Transverse colon (tissue), 4 donors: ENCODE measurements at regions of chr12 and their contacts with region 1.

Region 1: GRCh38 chr12:90124289-90124688 is 415.7 kb upstream of the ATP2B1 start:
- DNase-seq: no peak
- H3K4me3 ChIP-seq: no peak overlapping the region
- H3K27ac ChIP-seq: no peak overlapping the region
- H3K4me1 ChIP-seq: peaks cover 0 to 4% (median 1%) of the 10 kb centered on the region in 4 donors
- H3K27me3 ChIP-seq: no peaks in the 10 kb centered on the region
- CTCF ChIP-seq: no peak
- EP300 ChIP-seq: no peak
- POLR2A ChIP-seq: no peak

Region 2: DNA sequence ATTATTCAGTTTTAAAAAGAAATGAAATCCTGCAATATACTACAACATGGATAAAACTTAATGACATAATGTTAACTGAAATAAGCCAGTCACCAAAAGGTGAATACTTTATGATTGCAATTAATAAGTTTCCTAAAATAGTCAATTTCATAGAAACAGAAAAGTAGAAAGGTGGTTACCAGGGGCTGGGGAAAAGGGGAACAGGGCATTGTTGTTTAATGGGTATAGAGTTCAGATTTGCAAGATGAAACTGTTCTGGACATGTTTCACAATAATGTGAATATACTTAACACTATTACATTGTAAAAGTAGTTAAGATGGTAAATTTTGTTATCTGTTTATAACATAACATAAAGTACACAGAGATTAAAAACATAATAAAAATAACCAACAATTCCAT is 279.8 kb after region 1 on chr12:
- in situ Hi-C with region 1: no loop called
- intact Hi-C with region 1: loop called (anchors 5 kb)
- DNase-seq: no peak
- H3K4me3 ChIP-seq: no peak overlapping the region
- H3K27ac ChIP-seq: no peak overlapping the region
- H3K4me1 ChIP-seq: peaks cover 0 to 5% (median 0%) of the 10 kb centered on the region in 4 donors
- H3K27me3 ChIP-seq: no peaks in the 10 kb centered on the region
- CTCF ChIP-seq: no peak
- EP300 ChIP-seq: no peak
- POLR2A ChIP-seq: no peak